Cardiac septum (tissue), 1 donor: ENCODE measurements at regions of chr2 and their contacts with region 1.

Region 1: DNA sequence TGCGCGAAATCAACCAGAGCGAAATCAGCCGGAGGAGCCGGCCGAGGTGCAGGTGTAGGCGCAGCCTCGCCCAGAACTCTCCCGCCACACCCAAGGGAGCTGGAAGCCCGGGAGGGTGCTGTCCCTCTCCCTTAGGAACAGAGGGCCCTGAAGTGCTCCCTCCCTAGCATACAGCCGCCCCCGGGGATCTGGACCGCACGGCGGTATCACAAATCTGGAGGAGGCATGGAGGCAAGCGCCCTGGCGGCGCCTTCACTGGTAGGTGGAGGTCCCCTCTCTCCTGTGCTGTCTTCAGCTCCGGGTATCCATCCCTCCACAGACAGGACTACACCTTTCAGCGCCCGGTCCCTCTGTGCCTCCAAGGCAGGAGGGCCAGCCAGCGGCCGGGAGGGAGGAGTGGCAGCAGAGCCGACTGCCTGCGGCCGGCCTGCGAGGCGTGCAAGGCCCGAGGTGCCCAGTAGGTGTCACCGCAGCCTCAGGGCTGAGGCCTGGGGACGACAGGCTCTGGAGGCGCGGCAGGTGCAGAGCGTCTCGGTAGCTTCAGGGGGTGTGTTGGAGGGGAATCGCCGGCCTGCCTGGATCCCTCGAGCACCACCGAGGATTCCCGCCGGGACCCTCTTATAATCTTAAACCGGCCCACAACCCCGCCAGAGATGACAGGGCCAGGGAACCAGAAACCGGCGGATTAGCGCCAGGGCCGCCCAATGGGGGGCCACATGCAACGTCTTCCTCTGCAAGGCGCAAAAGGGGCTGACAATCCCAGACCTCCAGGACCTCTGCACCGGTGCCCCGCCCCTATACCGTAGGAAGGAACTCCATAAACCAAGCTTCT is 2.8 kb downstream of the IHH start:
- DNase-seq: peak; percentile 89

Region 2: DNA sequence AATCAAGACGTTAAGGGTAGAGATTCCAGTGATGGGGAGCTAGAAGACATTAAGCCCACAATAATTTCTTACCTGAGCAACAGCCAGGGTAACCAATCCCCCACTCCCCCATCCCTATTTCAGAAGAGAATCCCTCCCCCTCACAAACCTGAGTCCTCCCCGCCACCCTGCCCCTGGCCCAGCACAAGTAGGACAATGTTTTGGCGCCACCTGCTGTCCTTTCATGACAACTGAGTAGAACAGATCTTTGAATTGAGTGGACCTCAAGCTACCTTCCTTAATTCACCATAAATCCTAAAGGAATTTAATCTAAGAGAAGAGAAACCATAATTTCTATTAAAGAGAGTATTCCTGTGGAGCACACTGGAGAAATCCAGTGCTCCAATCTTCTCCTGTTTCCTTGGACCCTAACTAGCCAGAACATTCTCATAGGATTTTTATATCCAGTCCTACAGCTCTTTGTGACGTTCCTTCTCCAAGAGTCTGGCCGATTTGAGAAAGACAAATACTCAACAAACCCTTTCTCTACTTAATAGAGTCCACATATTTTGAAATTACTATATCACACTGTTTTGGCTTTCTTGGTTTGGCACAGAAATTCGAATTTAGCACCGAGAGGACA is 61.6 kb after region 1 on chr2:
- intact Hi-C with region 1: loop called (anchors 1 kb)
- DNase-seq: peak; percentile 83

Region 3: GRCh38 chr2:219155054-219155644 is 97.2 kb after region 1 on chr2:
- intact Hi-C with region 1: loop called (anchors 1 kb)
- DNase-seq: no peak

Region 4: DNA sequence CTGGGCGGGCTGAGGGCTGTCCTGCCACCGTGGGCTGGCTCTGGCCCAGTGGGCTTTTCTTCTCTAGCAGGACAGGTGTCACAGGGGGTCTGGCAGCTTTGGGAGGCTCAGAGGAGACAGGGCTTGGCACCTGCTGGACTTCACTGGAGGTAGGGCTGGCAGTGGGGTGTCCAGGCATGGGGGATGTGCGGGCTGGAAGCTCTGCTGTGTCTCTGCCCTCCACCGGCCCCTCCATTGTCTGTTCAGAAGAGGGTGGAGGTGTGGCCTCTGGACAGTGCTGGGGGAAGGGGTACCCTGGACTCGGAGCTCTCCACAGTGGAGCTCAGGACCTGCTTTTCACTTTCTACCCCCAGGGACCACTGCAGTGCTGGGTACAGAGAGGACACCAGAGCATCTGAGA is 242.1 kb after region 1 on chr2:
- intact Hi-C with region 1: loop called (anchors 5 kb)
- DNase-seq: peak; percentile 39